CD8-positive, alpha-beta memory T cell (primary cell): ENCODE measurements at regions of chr9 and their contacts with region 1.

Region 1: GRCh38 chr9:127980706-127981558 is at the start of gene EEIG1:
- DNase-seq: peak; percentile 96 to 99 (median 97)
- H3K4me3 ChIP-seq: peak within 1 kb of the TSS; percentile 98
- H3K4me3 Mint-ChIP-seq: peak within 1 kb of the TSS; percentile 95 to 99 (median 97)
- H3K27ac ChIP-seq: peak within 1 kb of the TSS; percentile 68
- H3K27ac Mint-ChIP-seq: peak within 1 kb of the TSS; percentile 90 to 99 (median 94)
- H3K4me1 ChIP-seq: peaks cover 48% of the 10 kb centered on the region
- H3K4me1 Mint-ChIP-seq: peaks cover 37 to 53% (median 41%) of the 10 kb centered on the region in 3 donors
- H3K27me3 ChIP-seq: no peaks in the 10 kb centered on the region
- H3K27me3 Mint-ChIP-seq: no peaks in the 10 kb centered on the region
- total RNA-seq, gene EEIG1: 82.2 to 93.3 TPM

Region 2: GRCh38 chr9:127887792-127888191 is 93.1 kb before region 1 on chr9:
- CTCF ChIA-PET with region 1: no interaction called
- POLR2A ChIA-PET with region 1: no interaction called
- DNase-seq: no peak
- H3K4me3 ChIP-seq: no peak overlapping the region
- H3K4me3 Mint-ChIP-seq: no peak overlapping the region
- H3K27ac ChIP-seq: no peak overlapping the region
- H3K27ac Mint-ChIP-seq: peak overlapping the region in 2 of 8 donors; percentile 60 to 70
- H3K4me1 ChIP-seq: no peaks in the 10 kb centered on the region
- H3K4me1 Mint-ChIP-seq: peaks cover 9 to 39% (median 12%) of the 10 kb centered on the region in 3 donors
- H3K27me3 ChIP-seq: no peaks in the 10 kb centered on the region
- H3K27me3 Mint-ChIP-seq: peaks cover 0 to 1% of the 10 kb centered on the region in 2 donors

Region 3: DNA sequence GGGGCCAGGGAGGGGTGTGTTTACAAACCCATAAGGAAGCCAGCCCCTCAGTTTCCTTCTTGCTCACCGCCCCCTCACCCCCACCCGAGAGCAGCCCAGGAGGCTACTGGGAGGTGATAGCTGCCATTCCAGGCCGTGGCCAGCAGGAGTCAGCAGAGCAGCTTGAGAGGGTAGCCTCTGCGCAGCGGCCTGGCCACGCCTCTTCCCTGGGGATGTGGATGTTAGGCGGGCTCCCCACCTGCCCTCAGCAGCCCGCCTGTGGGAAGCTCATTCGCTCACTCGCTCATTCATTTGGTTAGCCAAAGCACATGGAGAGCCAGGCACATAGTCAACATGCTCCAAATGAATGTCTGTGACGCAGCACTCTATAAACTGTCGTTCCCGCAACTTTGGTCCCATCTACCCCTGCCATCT is 37.2 kb before region 1 on chr9:
- CTCF ChIA-PET with region 1: interaction called, 15 read pairs
- POLR2A ChIA-PET with region 1: interaction called, 4 read pairs
- DNase-seq: peak; percentile 62 to 82 (median 66)
- H3K4me3 ChIP-seq: no peak overlapping the region
- H3K4me3 Mint-ChIP-seq: peak overlapping the region in 3 of 7 donors; percentile 17 to 36 (median 18)
- H3K27ac ChIP-seq: no peak overlapping the region
- H3K27ac Mint-ChIP-seq: peak overlapping the region in 7 of 8 donors; percentile 30 to 83 (median 66)
- H3K4me1 ChIP-seq: peaks cover 32% of the 10 kb centered on the region
- H3K4me1 Mint-ChIP-seq: peaks cover 15 to 36% (median 21%) of the 10 kb centered on the region in 3 donors
- H3K27me3 ChIP-seq: no peaks in the 10 kb centered on the region
- H3K27me3 Mint-ChIP-seq: no peaks in the 10 kb centered on the region

Region 4: DNA sequence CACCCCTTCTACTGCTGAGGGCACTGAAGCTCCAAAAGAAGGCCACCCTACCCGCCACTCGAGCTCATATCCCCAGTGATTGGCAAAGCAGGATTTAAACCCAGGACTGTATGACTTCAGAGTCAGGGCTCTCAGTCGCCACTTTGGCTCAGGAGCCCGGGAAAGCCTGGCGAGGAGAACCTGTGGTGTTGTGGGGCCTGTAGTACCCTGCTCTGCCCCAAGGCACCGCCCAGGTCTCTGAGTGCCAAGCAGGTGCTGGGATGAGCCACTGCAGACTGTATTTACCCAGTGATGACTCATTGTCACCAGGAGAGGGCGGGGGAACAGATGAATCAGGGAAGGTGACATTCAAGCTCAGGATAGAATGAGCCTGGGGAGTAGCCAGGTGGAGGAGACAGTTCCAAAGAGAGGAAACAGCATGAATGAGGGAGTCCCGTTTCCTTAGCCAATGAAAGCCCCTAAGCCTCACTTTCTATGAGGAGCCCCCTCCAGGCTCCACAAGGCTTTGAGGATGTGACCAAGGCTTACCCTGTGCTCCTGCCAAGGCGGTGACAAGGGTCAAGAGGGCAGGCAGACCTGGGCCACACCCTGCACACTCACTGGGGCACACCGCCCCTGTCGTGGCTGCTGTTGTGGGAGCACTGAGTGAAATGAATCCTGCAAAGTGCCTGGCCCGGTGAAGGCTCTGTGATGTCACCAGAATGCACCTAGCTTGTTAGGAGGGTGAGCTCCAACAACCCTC is 25.5 kb before region 1 on chr9:
- CTCF ChIA-PET with region 1: interaction called, 55 read pairs
- POLR2A ChIA-PET with region 1: interaction called, 5 read pairs
- DNase-seq: peak; percentile 63 to 87 (median 64)
- H3K4me3 ChIP-seq: peak overlapping the region; percentile 42
- H3K4me3 Mint-ChIP-seq: peak overlapping the region; percentile 1 to 71 (median 57)
- H3K27ac ChIP-seq: no peak overlapping the region
- H3K27ac Mint-ChIP-seq: peak overlapping the region; percentile 28 to 89 (median 76)
- H3K4me1 ChIP-seq: peaks cover 97% of the 10 kb centered on the region
- H3K4me1 Mint-ChIP-seq: peaks cover 72 to 92% (median 82%) of the 10 kb centered on the region in 3 donors
- H3K27me3 ChIP-seq: no peaks in the 10 kb centered on the region
- H3K27me3 Mint-ChIP-seq: no peaks in the 10 kb centered on the region

Region 5: DNA sequence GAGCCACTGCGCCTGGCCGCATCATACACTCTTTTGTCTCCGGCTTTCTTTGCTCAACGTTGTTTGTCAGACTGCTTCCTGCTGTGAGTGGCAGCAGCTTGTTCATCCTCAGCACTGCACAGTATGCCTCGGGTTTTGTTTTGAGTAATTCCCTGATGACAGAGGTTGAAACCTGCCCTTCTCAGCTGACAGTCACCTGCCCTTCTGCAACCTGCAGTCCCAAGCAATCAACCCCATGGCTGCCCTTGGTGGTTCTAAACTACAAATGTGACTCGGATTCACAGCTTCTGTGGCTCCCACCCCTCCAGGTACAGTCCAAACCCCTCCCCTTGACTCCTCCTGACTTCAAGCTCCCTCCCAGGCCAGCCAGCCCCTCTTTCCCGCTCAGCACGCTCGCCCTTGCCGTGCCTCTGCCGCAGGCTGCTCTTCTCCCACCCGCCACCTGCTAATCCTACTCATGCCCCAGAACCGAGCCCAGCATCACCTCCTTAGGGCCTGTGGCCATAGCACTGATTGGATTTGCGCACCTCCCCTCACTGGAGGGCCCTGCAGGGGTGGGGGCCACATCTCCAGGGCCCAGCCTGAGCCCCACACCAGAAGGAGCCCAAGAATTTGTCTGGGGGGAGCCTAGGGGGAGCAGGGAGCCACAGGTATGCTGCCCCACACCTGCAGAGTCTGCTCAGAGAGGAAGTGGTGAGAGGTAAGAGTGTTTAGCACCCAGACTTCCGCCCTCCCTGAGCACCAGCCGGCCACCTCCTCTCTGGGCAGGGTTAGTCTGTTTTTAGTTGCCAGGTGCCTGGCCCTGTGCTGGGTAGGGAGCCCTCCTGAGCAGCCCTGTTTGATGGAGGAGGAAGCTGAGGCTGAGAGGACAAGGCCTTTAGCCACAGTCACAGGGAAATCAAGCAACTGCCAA is 10.3 kb before region 1 on chr9:
- CTCF ChIA-PET with region 1: interaction called, 10 read pairs
- POLR2A ChIA-PET with region 1: interaction called, 10 read pairs
- DNase-seq: peak; percentile 36 to 84 (median 75)
- H3K4me3 ChIP-seq: peak overlapping the region; percentile 70
- H3K4me3 Mint-ChIP-seq: peak overlapping the region; percentile 85 to 99 (median 95)
- H3K27ac ChIP-seq: peak overlapping the region; percentile 55
- H3K27ac Mint-ChIP-seq: peak overlapping the region; percentile 87 to 100 (median 98)
- H3K4me1 ChIP-seq: peaks cover 99% of the 10 kb centered on the region
- H3K4me1 Mint-ChIP-seq: peaks cover 95 to 100% (median 100%) of the 10 kb centered on the region in 3 donors
- H3K27me3 ChIP-seq: no peaks in the 10 kb centered on the region
- H3K27me3 Mint-ChIP-seq: peaks cover 0 to 2% of the 10 kb centered on the region in 2 donors

Region 6: DNA sequence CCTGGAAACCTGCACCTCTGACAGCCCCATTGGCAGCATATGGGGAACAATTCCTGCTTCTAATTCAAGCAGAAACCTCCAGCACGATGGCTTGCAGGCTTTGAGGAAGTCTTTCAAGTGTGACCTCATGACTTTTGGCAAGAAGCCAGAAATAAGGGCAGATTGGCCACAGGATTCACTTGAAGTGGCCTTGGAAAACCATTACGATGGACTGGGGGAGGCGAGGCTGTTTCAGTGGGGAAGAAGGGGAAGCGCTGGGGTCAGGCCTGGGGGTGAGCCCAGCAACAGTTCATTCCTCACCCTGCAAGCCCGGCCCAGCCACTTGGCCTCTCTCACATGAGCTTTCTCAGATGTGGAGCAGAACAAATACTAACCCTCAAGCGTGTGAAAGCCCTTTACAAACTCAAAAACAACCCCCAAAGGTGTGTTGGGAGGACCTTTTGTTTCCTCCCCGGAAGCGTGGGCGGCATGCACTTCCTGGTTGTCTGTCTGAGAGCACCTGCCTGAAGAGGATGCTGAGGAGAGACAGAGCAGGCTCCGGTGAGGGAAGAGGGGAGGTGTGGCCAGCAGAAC is 26.7 kb after region 1 on chr9:
- CTCF ChIA-PET with region 1: interaction called, 10 read pairs
- POLR2A ChIA-PET with region 1: interaction called, 8 read pairs
- DNase-seq: peak; percentile 75 to 96 (median 90)
- H3K4me3 ChIP-seq: peak overlapping the region; percentile 67
- H3K4me3 Mint-ChIP-seq: peak overlapping the region; percentile 65 to 92 (median 77)
- H3K27ac ChIP-seq: peak overlapping the region; percentile 53
- H3K27ac Mint-ChIP-seq: peak overlapping the region; percentile 91 to 99 (median 97)
- H3K4me1 ChIP-seq: peaks cover 76% of the 10 kb centered on the region
- H3K4me1 Mint-ChIP-seq: peaks cover 40 to 81% (median 54%) of the 10 kb centered on the region in 3 donors
- H3K27me3 ChIP-seq: no peaks in the 10 kb centered on the region
- H3K27me3 Mint-ChIP-seq: no peaks in the 10 kb centered on the region

Region 7: GRCh38 chr9:128026773-128027541 is 46.0 kb after region 1 on chr9:
- CTCF ChIA-PET with region 1: interaction called, 186 read pairs
- POLR2A ChIA-PET with region 1: interaction called, 29 read pairs
- DNase-seq: peak; percentile 31 to 74 (median 66)
- H3K4me3 ChIP-seq: peak overlapping the region; percentile 60
- H3K4me3 Mint-ChIP-seq: peak overlapping the region; percentile 72 to 90 (median 80)
- H3K27ac ChIP-seq: peak overlapping the region; percentile 84
- H3K27ac Mint-ChIP-seq: peak overlapping the region; percentile 96 to 99 (median 98)
- H3K4me1 ChIP-seq: peaks cover 93% of the 10 kb centered on the region
- H3K4me1 Mint-ChIP-seq: peaks cover 84 to 96% (median 89%) of the 10 kb centered on the region in 3 donors
- H3K27me3 ChIP-seq: no peaks in the 10 kb centered on the region
- H3K27me3 Mint-ChIP-seq: no peaks in the 10 kb centered on the region